ENCODE measurements at regions of chr4 and their contacts with region 1.

Region 1: DNA sequence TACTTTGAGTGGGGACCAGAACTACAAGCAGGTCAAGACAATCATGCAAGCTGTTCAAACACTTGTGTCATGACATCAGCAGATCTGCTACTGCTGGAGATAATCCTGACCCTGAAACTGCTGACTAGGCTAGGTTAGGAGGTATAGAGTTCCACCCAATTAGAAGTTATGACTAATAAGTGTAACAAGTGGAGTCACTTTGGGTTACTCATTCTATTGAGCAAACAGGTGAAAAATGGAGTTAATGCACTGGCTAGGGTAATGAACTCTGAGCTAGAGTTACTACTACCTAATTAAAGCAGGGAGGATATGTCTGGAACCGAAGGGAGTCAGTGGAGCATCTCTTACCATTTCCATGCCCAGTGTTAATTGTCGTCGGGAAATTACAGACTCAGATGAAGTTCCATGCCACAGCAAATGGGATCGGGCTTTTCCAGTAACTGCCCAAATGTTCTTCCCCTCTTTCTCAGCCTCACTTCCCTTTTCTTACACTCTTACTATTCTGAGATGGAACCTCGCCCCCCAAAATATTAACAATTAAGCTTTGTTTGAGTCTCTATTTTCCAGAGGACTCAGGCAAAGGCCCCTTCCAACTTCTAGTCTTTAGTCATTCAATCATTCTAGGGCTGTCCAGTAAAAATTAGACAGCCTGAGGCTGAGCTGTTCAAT is 19.8 kb upstream of the MANBA start:
- DNase-seq: peak in 1 of 2 experiments; percentile 92
- H3K4me3 ChIP-seq: no peak overlapping the region
- H3K27ac ChIP-seq: peak overlapping the region; percentile 56
- H3K4me1 ChIP-seq: peaks cover 6% of the 10 kb centered on the region
- H3K27me3 ChIP-seq: no peaks in the 10 kb centered on the region
- CTCF ChIP-seq: no peak

Region 2: GRCh38 chr4:102404431-102405028 is 376.1 kb before region 1 on chr4:
- CTCF ChIA-PET with region 1: no interaction called
- POLR2A ChIA-PET with region 1: no interaction called
- intact Hi-C with region 1: no loop called
- DNase-seq: no peak
- H3K4me3 ChIP-seq: no peak overlapping the region
- H3K27ac ChIP-seq: no peak overlapping the region
- H3K4me1 ChIP-seq: no peaks in the 10 kb centered on the region
- H3K27me3 ChIP-seq: no peaks in the 10 kb centered on the region
- CTCF ChIP-seq: no peak

Region 3: DNA sequence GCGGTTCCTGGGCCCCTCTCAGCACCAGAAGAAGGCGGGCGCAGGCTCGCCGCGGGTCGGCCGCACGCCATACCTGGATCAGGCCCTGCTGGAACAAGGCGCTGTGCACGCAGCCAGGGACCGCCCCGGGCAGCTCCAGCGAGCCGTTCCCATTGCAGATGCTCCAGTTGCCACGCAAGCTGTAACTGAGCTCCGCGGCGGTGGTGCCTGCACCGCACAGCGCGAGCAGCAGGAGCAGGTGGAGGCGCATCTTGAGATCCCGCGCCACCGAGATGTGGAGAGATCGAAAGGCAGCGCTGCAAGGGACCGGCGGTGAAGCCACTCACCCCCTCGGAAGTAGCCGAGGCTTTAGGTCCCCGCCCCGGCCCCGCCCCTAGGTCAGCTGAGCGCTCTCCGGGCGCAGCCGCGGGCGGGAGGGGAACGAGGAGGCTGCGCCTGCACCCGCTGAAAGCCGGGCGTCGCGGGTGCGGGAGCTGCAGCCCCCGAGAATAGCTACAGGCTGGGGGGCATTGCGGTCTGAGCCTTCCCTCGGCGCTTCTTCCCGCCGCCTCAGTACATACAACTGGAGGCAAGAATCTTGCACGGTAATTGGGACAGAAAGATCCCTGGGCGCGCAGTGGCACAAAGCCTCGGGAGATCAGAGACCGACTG is 19.8 kb before region 1 on chr4 and contains the start of gene MANBA:
- CTCF ChIA-PET with region 1: no interaction called
- POLR2A ChIA-PET with region 1: interaction called, 11 read pairs
- intact Hi-C with region 1: no loop called
- DNase-seq: peak; percentile 60 to 63
- H3K4me3 ChIP-seq: peak within 1 kb of the TSS; percentile 89
- H3K27ac ChIP-seq: no peak within 1 kb of the TSS
- H3K4me1 ChIP-seq: peaks cover 17% of the 10 kb centered on the region
- H3K27me3 ChIP-seq: no peaks in the 10 kb centered on the region
- CTCF ChIP-seq: no peak
- total RNA-seq, gene MANBA: 9.8 and 11.8 TPM in 2 replicates

Region 4: DNA sequence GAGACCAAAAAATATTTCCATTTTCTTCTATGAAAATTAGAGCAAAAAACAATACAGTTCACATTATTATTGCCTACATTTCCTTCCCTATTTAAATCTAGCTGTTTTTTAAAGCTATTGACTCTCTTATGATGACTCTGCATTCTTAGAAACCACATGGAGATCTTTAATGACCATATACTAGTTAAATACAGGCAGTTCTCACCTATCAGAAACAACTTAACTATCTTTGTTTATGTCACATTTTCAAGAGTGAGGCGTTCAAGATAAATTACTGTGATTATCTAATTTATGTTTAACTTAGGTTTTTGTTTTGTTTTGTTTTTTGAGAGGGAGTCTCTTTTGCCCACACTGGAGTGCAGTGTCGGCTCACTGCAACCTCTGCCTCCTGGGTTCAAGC is 91.2 kb after region 1 on chr4:
- CTCF ChIA-PET with region 1: no interaction called
- POLR2A ChIA-PET with region 1: no interaction called
- intact Hi-C with region 1: no loop called
- DNase-seq: no peak
- H3K4me3 ChIP-seq: peak overlapping the region; percentile 14; the same call in 1 of the 2 replicates
- H3K27ac ChIP-seq: no peak overlapping the region
- H3K4me1 ChIP-seq: peaks cover 32% of the 10 kb centered on the region
- H3K27me3 ChIP-seq: no peaks in the 10 kb centered on the region
- CTCF ChIP-seq: no peak

Measured in PC-9 (cell line).